Activated CD8-positive, alpha-beta T cell treated with anti-CD3 and anti-CD28 coated beads, Interleukin-2, amount 10 ng/mL, durations not matched to agents 7 days and 5 days (primary cell): ENCODE measurements at regions of chr17 and their contacts with region 1.

Region 1: DNA sequence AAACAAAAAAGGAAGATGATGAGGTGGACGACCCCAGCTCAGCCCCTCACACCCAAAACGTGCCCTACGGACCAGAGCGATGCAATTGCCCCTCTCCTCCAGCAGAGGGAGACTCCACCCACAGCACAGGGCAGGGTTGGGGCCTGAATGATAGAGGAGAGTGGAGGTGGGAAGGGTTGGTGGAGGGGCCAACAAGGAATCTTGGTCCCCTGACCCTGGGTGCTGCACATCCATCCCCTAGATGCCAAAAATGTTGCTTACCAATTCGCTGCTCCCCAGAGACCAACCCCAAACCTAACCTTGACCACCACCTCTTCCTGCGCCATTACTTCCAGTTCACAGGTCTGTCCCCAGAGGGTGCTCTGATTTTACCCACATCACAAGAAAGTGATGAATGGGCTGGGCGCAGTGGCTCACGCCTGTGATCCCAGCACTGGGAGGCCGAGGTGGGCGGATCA is 12.9 kb downstream of the P2RX5 start:
- DNase-seq: peak; percentile 74
- ATAC-seq: peak; percentile 90
- H3K4me3 Mint-ChIP-seq: no peak overlapping the region
- H3K27ac Mint-ChIP-seq: no peak overlapping the region
- H3K4me1 Mint-ChIP-seq: peaks cover 25% of the 10 kb centered on the region
- H3K27me3 Mint-ChIP-seq: no peaks in the 10 kb centered on the region

Region 2: DNA sequence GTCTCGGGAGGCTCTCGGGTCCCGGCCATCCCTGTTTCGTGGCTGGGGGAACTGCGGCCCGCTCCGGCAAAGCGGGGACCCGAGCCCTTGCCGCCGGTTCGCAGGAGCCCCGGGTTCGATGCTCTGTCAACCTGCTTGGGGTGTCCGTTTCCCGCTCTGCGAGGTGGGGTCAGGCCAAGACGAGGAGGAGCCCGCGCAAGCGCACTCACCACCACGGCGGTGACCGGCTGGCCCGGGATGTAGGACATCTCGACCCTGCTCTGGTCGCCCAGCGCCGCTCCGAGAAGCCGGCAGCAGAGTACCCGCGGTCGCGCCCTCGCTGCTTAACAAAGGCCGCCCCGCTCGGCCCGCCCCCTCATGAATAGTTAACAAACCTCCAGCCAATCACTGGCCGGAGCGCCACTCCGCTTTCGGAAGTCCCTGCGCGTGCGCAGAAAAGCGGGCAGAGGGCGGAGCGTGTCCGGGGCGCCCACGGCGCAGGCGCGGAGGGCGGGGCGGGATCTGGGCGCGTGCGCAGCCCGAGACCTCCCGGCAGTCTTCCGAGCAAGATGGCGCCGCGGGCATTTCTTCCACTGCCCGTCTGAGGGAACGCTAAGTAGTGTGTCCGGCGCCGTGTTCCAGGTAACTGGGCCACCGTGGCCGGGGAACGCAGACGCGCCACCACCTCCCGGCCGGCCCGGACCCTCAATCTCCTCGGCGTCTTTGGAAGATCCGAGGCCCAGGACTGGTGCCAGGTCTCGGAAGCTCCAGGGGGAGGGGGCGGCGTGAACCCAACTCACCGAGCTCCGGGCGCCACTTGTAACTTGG is 14.6 kb before region 1 on chr17 and contains the starts of genes EMC6 and TAX1BP3:
- CTCF ChIA-PET with region 1: interaction called, 4 read pairs
- POLR2A ChIA-PET with region 1: interaction called, 11 read pairs
- DNase-seq: peak; percentile 99
- ATAC-seq: peak; percentile 97
- H3K4me3 Mint-ChIP-seq: peak within 1 kb of the TSS; percentile 91
- H3K27ac Mint-ChIP-seq: peak within 1 kb of the TSS; percentile 84
- H3K4me1 Mint-ChIP-seq: peaks cover 23% of the 10 kb centered on the region
- H3K27me3 Mint-ChIP-seq: no peaks in the 10 kb centered on the region
- total RNA-seq, gene EMC6: 39.7 to 43.1 TPM
- total RNA-seq, gene TAX1BP3: 16.1 to 18.0 TPM

Region 3: DNA sequence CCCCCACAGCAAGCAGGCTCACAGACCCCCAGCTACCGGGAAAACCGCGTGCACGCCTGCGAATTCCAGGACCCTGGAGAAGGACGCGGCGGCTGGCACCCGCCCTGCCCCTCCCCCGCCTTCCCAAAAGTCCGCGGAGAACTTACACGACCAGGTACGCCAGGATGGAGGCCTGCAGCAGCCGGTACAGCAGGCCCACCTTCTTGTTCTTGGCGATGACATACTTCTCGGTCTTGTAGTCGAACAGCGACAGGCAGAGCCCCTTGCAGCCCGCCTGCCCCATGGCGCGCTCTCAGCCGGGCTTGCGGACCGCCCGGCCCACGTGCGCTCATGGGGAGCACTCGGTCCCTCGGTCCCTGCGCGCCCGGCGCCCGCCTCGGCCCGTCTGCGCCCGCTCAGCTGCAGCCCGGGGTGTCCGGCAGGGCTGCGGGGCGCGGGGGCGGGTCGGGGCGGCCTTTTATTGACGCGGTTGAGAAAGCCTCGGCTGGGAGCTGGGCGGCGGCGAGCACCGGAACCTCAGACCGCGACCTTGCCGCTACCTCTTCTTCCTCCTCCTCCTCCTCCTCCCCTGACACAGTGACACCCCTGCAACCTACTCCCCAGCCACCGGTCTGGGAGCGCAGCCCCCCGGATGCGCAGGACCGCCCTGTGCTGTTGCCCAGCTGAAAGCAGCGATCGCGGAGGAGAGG is 12.8 kb after region 1 on chr17 and contains the start of gene P2RX5:
- CTCF ChIA-PET with region 1: interaction called, 19 read pairs
- POLR2A ChIA-PET with region 1: no interaction called
- DNase-seq: peak; percentile 71
- ATAC-seq: peak; percentile 78
- H3K4me3 Mint-ChIP-seq: peak within 1 kb of the TSS; percentile 86
- H3K27ac Mint-ChIP-seq: peak within 1 kb of the TSS; percentile 87
- H3K4me1 Mint-ChIP-seq: peaks cover 37% of the 10 kb centered on the region
- H3K27me3 Mint-ChIP-seq: no peaks in the 10 kb centered on the region
- total RNA-seq, gene P2RX5: 7.8 to 8.1 TPM